Esophagus muscularis mucosa (tissue), 4 donors: ENCODE measurements at regions of chr2 and their contacts with region 1.

Region 1: DNA sequence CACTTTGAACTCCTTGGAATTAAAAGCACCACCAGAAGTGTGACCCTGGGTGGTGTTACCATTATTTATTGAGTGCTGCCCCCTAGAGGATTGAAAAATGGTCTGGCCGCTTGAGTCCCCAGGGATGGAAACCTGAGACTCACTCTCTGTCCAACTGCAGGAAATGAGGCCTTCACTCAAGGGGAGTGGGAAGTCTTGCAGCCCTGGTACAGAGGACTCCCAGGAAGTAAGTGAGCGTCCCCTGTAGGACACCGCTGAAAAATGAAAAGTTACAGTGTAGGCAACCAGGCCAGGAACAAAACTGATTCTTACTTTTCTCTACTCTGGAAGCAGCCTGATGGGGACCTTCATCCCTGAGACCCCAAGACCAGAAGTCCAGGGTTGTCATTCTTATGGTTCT is 2.2 kb upstream of the NRP2 start:
- DNase-seq: peak; percentile 92
- H3K4me3 ChIP-seq: no peak overlapping the region
- H3K27ac ChIP-seq: peak overlapping the region in 2 of 4 donors; percentile 94 to 98
- H3K4me1 ChIP-seq: peaks cover 14 to 29% (median 27%) of the 10 kb centered on the region in 4 donors
- H3K27me3 ChIP-seq: no peaks in the 10 kb centered on the region
- CTCF ChIP-seq: peak; percentile 53 to 70 (median 69)
- EP300 ChIP-seq: no peak
- POLR2A ChIP-seq: no peak

Region 2: GRCh38 chr2:204145263-204145751 is 1534.8 kb before region 1 on chr2:
- intact Hi-C with region 1: loop called (anchors 10 kb)
- DNase-seq: no peak
- H3K4me3 ChIP-seq: peak overlapping the region; percentile 30 to 52 (median 41)
- H3K27ac ChIP-seq: no peak overlapping the region
- H3K4me1 ChIP-seq: peaks cover 0 to 11% (median 0%) of the 10 kb centered on the region in 4 donors
- H3K27me3 ChIP-seq: no peaks in the 10 kb centered on the region
- CTCF ChIP-seq: peak; percentile 83 to 94 (median 88)
- EP300 ChIP-seq: no peak
- POLR2A ChIP-seq: no peak

Region 3: GRCh38 chr2:204325468-204325867 is 1354.6 kb before region 1 on chr2:
- intact Hi-C with region 1: loop called (anchors 5 kb)
- DNase-seq: no peak
- H3K4me3 ChIP-seq: peak overlapping the region in 1 of 4 donors; percentile 4
- H3K27ac ChIP-seq: no peak overlapping the region
- H3K4me1 ChIP-seq: peaks cover 6 to 21% (median 7%) of the 10 kb centered on the region in 4 donors
- H3K27me3 ChIP-seq: no peaks in the 10 kb centered on the region
- CTCF ChIP-seq: peak; percentile 87 to 92 (median 90)
- EP300 ChIP-seq: no peak
- POLR2A ChIP-seq: no peak

Region 4: DNA sequence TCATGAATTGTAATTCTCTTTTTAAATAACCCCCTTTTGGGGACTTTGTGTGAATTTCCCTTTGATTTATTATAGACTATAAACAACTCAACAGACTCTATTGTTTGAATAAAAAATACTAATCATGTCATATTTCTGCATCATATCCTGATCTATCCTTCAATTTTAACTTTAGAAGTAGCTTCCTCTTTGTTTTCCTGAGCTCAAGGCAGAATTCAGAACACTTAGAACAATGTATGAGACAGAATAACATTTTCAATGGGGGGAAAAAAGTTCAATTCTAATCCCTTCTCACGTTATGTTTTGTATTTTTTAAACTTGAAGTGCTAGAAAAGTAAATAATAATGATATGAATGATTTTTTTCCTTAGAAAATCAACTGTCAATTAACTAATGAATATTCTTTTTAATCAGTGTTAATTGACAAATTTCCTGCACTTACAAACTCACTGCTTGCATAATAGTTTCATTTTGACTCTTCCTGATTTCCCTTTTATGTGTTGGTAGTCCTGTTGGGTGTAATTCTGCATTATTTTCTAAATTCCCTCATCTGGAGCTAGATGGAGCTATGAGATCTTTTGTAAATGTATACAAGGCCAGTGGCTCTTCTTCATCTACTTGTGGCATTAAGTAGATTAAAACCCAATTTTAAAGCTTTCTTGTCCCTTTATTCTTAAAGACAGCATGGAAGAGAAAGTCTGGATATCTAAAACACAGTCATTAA is 808.7 kb before region 1 on chr2:
- intact Hi-C with region 1: loop called (anchors 5 kb)
- DNase-seq: no peak
- H3K4me3 ChIP-seq: no peak overlapping the region
- H3K27ac ChIP-seq: no peak overlapping the region
- H3K4me1 ChIP-seq: peaks cover 17 to 37% (median 26%) of the 10 kb centered on the region in 4 donors
- H3K27me3 ChIP-seq: no peaks in the 10 kb centered on the region
- CTCF ChIP-seq: peak; percentile 39 to 49 (median 43)
- EP300 ChIP-seq: no peak
- POLR2A ChIP-seq: no peak

Region 5: DNA sequence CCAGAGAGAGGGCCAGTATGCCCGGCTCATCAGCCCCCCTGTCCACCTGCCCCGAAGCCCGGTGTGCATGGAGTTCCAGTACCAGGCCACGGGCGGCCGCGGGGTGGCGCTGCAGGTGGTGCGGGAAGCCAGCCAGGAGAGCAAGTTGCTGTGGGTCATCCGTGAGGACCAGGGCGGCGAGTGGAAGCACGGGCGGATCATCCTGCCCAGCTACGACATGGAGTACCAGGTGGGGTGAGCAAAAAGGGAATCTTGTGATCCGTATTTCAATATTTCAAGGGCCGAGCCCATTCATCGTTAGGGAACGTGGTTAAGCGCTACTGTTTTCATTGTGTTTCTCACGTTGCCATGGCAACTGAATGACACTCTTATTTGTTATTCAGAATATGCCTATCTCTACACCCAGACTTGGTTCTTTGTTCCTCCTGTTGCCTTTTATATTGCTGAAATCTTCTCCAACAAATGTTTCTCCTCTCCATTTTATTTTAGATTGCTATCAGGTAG is 83.7 kb after region 1 on chr2:
- intact Hi-C with region 1: loop called (anchors 5 kb)
- DNase-seq: no peak
- H3K4me3 ChIP-seq: peak overlapping the region in 1 of 4 donors; percentile 29
- H3K27ac ChIP-seq: peak overlapping the region; percentile 80 to 98 (median 90)
- H3K4me1 ChIP-seq: peaks cover 22 to 100% (median 94%) of the 10 kb centered on the region in 4 donors
- H3K27me3 ChIP-seq: peaks cover 0 to 4% (median 0%) of the 10 kb centered on the region in 4 donors
- CTCF ChIP-seq: peak; percentile 70 to 81 (median 76)
- EP300 ChIP-seq: no peak
- POLR2A ChIP-seq: no peak

Region 6: DNA sequence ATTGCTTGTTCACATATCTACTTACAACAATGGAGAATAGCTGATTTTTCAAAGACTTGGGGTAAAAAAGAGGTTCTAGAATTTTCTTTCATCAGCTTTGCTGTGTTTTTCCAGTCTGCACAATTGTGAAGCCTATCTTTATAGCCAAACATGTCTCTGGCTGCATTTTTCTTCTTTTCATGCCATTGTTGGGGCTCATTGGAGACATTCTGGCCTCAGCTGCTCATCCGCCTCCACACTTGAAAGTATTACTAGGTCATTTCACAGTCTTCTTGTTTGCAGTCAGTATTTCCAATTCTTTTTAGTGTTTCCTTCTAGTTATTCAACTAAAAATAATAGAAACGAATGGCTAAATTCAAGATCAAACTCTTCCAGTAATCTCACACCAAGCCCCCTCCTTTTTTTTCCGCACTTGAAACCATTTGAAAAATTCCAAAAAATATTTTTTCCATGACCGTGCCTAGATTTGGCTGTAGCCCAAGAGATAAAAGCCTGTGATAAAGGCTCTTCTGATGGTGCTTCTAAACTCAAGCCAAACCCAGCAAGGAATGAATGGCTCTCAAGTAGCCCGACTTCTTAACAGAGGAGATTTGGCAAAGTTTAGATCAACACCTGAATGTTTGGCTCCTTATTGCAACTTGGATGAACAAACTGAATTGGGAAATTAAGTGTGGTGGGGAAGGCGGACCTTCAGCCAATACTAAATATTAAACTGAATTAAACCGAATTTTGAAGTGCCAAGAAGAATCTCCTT is 105.6 kb after region 1 on chr2:
- intact Hi-C with region 1: no loop called
- DNase-seq: no peak
- H3K4me3 ChIP-seq: no peak overlapping the region
- H3K27ac ChIP-seq: peak overlapping the region; percentile 80 to 98 (median 90)
- H3K4me1 ChIP-seq: peaks cover 0 to 92% (median 90%) of the 10 kb centered on the region in 4 donors
- H3K27me3 ChIP-seq: no peaks in the 10 kb centered on the region
- CTCF ChIP-seq: no peak
- EP300 ChIP-seq: no peak
- POLR2A ChIP-seq: no peak